Endothelial cell of umbilical vein (primary cell): ENCODE measurements at regions of chr1 and their contacts with region 1.

Region 1: DNA sequence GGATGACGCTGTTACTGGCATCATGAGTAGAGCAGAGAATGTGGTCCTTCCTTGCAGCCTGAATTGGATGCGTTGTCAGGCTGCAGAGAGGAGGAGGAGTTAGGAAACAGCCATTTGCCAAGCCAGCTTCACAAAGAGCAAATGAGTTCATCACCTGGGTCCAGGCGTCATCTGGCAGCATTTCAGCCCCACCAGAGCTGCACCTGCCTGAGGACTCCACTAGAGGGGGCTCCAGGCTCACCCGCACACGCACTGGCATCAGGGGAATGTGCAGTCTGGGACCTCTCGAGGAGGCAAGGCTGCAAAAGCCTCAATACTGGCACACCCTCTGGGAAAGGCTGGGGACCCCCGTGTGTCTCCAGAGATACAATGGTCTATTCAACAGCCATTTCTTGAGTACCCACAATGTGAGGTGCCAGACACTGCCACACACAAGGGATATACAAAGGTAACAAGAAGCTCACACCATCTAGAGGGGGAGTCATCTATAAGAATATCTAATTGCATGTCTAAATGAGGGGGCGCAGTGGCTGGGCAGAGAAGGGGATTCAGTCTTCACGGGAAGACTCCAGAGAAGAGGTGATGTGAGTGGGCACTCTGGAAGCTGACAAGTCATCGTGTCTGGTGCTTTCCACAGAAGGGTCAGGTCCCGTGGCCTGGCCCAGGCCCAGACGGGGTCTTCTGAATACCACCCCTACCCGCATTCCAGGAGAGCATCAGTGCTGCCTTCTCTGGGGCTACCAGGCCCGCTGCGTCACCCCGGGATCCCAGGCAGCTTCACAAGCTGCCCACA is 53.5 kb upstream of the CNTN2 start:
- DNase-seq: peak; percentile 76
- H3K4me3 ChIP-seq: no peak overlapping the region
- H3K27ac ChIP-seq: no peak overlapping the region
- H3K4me1 ChIP-seq: no peaks in the 10 kb centered on the region
- H3K27me3 ChIP-seq: peaks cover 0 to 19% of the 10 kb centered on the region in 2 experiments
- CTCF ChIP-seq: peak; percentile 92 to 98
- POLR2A ChIP-seq: no peak

Region 2: DNA sequence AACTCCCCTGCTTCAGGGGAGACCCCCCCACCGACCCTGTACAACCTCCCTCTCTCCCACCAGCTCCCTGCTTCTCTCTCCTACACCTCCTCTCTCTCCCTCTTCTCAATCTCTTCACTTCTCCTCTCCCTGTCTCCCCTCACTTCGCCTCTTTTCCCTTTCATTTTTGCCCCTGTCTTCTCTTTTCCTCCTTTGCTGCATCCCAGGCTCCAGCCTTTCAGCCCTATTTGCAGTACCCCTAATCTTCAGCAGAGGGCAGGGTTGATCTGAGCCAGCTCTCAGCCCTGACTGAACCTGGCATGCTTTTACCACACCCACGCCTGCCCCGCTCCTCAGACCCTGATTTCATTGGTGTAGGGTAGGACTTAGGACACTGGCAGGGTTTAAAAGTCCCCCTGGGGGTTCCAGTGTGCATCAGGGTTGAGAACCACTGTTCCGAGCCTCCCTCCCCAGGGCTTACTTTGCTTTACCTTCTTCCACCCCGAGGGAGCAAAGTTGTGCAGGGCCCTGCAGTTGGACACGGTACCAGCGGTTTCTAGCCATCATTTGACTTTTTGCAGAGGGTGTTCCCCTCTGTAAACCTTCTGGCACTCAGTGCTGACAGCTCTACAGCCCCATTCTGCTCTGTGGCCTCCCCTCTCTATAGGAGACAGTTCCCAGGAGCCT is 13.8 kb before region 1 on chr1:
- CTCF ChIA-PET with region 1: interaction called, 11 read pairs
- POLR2A ChIA-PET with region 1: no interaction called
- dilution Hi-C with region 1: no loop called
- intact Hi-C with region 1: no loop called
- DNase-seq: peak; percentile 31
- H3K4me3 ChIP-seq: no peak overlapping the region
- H3K27ac ChIP-seq: no peak overlapping the region
- H3K4me1 ChIP-seq: peaks cover 14% of the 10 kb centered on the region
- H3K27me3 ChIP-seq: peaks cover 0 to 2% of the 10 kb centered on the region in 2 experiments
- CTCF ChIP-seq: peak; percentile 62 to 73
- POLR2A ChIP-seq: no peak

Region 3: GRCh38 chr1:205003393-205004131 is 14.1 kb after region 1 on chr1:
- CTCF ChIA-PET with region 1: interaction called, 10 read pairs
- POLR2A ChIA-PET with region 1: no interaction called
- dilution Hi-C with region 1: no loop called
- intact Hi-C with region 1: no loop called
- DNase-seq: no peak
- H3K4me3 ChIP-seq: no peak overlapping the region
- H3K27ac ChIP-seq: no peak overlapping the region
- H3K4me1 ChIP-seq: no peaks in the 10 kb centered on the region
- H3K27me3 ChIP-seq: peaks cover 2 to 3% of the 10 kb centered on the region in 2 experiments
- CTCF ChIP-seq: no peak
- POLR2A ChIP-seq: no peak